ENCODE measurements at regions of chr10 and their contacts with region 1.

Region 1: GRCh38 chr10:124741281-124741921 is 2.8 kb downstream of the FAM53B start:
- DNase-seq: peak; percentile 73 to 97 (median 87)

Region 2: GRCh38 chr10:124354411-124355382 is 386.7 kb before region 1 on chr10:
- intact Hi-C with region 1: no loop called
- DNase-seq: peak in 3 of 10 donors; percentile 16 to 87 (median 30)

Region 3: DNA sequence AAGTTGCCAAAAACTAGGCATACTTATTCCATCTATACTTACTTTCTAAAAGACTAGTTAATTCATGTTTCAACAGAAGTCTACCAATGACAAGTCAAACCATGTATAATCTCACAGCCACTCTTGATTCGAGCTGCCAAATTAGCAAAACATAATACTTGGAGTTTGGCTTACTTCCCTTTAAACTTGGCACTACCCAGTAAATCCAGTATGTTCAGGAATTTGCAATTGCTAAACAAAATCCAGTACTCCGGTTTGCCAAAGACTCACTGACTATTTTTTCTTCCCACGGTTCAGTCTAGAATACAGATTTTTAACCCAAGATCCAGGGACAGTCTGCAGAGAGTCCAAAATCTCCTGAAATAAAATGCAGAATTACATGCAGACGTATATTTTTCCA is 327.3 kb before region 1 on chr10:
- intact Hi-C with region 1: no loop called
- DNase-seq: no peak

Region 4: GRCh38 chr10:124530215-124530665 is 211.2 kb before region 1 on chr10:
- intact Hi-C with region 1: loop called (anchors 2 kb)
- DNase-seq: peak; percentile 80 to 98 (median 91)

Region 5: GRCh38 chr10:124632064-124632531 is 109.3 kb before region 1 on chr10:
- intact Hi-C with region 1: loop called (anchors 5 kb)
- DNase-seq: peak in 3 of 10 donors; percentile 47 to 93 (median 66)

Region 6: GRCh38 chr10:124708922-124709520 is 32.4 kb before region 1 on chr10:
- intact Hi-C with region 1: loop called (anchors 5 kb)
- DNase-seq: peak in 3 of 10 donors; percentile 49 to 91 (median 82)

Region 7: GRCh38 chr10:124791378-124792348 is 50.3 kb after region 1 on chr10 and contains the start of gene EEF1AKMT2:
- intact Hi-C with region 1: loop called (anchors 10 kb)
- DNase-seq: peak; percentile 66 to 97 (median 81)

Region 8: GRCh38 chr10:124878457-124878739 is 137.0 kb after region 1 on chr10:
- intact Hi-C with region 1: no loop called
- DNase-seq: peak in 2 of 10 donors; percentile 4 to 10